ENCODE measurements at regions of chr7 and their contacts with region 1.

Region 1: GRCh38 chr7:117399820-117400422 is 27.4 kb downstream of the ASZ1 start:
- DNase-seq: no peak
- H3K4me3 ChIP-seq: no peak overlapping the region
- H3K27ac ChIP-seq: no peak overlapping the region
- H3K4me1 ChIP-seq: no peaks in the 10 kb centered on the region
- H3K27me3 ChIP-seq: no peaks in the 10 kb centered on the region
- CTCF ChIP-seq: peak; percentile 70

Region 2: GRCh38 chr7:117458977-117459583 is 59.2 kb after region 1 on chr7:
- CTCF ChIA-PET with region 1: no interaction called
- POLR2A ChIA-PET with region 1: no interaction called
- intact Hi-C with region 1: loop called (anchors 5 kb)
- DNase-seq: no peak
- H3K4me3 ChIP-seq: no peak overlapping the region
- H3K27ac ChIP-seq: no peak overlapping the region
- H3K4me1 ChIP-seq: no peaks in the 10 kb centered on the region
- H3K27me3 ChIP-seq: no peaks in the 10 kb centered on the region
- CTCF ChIP-seq: peak; percentile 76

Region 3: GRCh38 chr7:117673839-117674238 is 273.9 kb after region 1 on chr7:
- CTCF ChIA-PET with region 1: interaction called, 4 read pairs
- POLR2A ChIA-PET with region 1: no interaction called
- intact Hi-C with region 1: loop called (anchors 5 kb)
- DNase-seq: no peak
- H3K4me3 ChIP-seq: no peak overlapping the region
- H3K27ac ChIP-seq: no peak overlapping the region
- H3K4me1 ChIP-seq: no peaks in the 10 kb centered on the region; the same call in 1 of the 2 replicates
- H3K27me3 ChIP-seq: no peaks in the 10 kb centered on the region
- CTCF ChIP-seq: peak; percentile 34; the same call in 1 of the 2 replicates

Region 4: GRCh38 chr7:118195837-118196474 is 796.0 kb after region 1 on chr7:
- CTCF ChIA-PET with region 1: no interaction called
- POLR2A ChIA-PET with region 1: no interaction called
- intact Hi-C with region 1: loop called (anchors 5 kb)
- DNase-seq: peak; percentile 48 to 49
- H3K4me3 ChIP-seq: no peak overlapping the region
- H3K27ac ChIP-seq: no peak overlapping the region
- H3K4me1 ChIP-seq: no peaks in the 10 kb centered on the region
- H3K27me3 ChIP-seq: no peaks in the 10 kb centered on the region
- CTCF ChIP-seq: peak; percentile 80